ENCODE measurements at regions of chr9 and their contacts with region 1.

Region 1: DNA sequence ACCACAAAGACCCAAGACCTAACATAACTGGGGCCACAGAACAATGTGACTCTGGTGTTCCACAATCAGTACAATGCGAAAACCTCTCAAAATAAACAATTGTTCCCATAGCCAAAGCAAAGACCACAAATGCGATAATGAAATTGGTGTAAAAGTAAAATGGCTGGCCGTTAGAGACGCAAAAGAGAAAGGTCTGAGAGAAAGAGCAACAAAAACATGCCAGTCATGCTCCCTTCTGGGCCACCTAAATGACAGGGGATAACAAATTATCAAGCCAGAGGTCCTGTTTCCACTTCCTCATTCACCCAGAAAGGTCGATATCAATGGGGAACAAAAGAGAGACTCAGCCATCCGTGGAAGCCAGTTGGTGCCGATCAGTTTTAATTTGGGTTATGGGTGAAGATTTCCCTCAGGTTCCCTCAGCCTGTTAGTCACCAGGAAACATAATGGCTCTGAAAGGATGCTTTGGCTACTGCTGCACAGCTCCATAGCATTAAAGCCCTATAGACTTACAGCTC is 9.2 kb upstream of the CFAP95 start:
- DNase-seq: no peak
- ATAC-seq: peak; percentile 71
- H3K4me3 ChIP-seq: no peak overlapping the region
- H3K27ac ChIP-seq: no peak overlapping the region
- H3K4me1 ChIP-seq: no peaks in the 10 kb centered on the region
- H3K27me3 ChIP-seq: no peaks in the 10 kb centered on the region
- CTCF ChIP-seq: no peak
- EP300 ChIP-seq: no peak
- POLR2A ChIP-seq: no peak
- RAD21 ChIP-seq: no peak

Region 2: GRCh38 chr9:69657269-69657668 is 154.1 kb before region 1 on chr9:
- CTCF ChIA-PET with region 1: no interaction called
- POLR2A ChIA-PET with region 1: no interaction called
- RAD21 ChIA-PET with region 1: no interaction called
- SMC1A ChIA-PET with region 1: no interaction called
- in situ Hi-C with region 1: no loop called
- intact Hi-C with region 1: no loop called
- DNase-seq: no peak
- ATAC-seq: no peak
- H3K4me3 ChIP-seq: no peak overlapping the region
- H3K27ac ChIP-seq: no peak overlapping the region
- H3K4me1 ChIP-seq: no peaks in the 10 kb centered on the region
- H3K27me3 ChIP-seq: no peaks in the 10 kb centered on the region; a peak in 1 of 4 replicates
- CTCF ChIP-seq: no peak
- EP300 ChIP-seq: no peak
- POLR2A ChIP-seq: no peak
- RAD21 ChIP-seq: no peak

Region 3: GRCh38 chr9:69771775-69772418 is 39.5 kb before region 1 on chr9:
- CTCF ChIA-PET with region 1: no interaction called
- POLR2A ChIA-PET with region 1: no interaction called
- RAD21 ChIA-PET with region 1: no interaction called
- SMC1A ChIA-PET with region 1: no interaction called
- in situ Hi-C with region 1: no loop called
- intact Hi-C with region 1: loop called (anchors 5 kb)
- DNase-seq: no peak
- ATAC-seq: no peak
- H3K4me3 ChIP-seq: no peak overlapping the region
- H3K27ac ChIP-seq: no peak overlapping the region
- H3K4me1 ChIP-seq: no peaks in the 10 kb centered on the region
- H3K27me3 ChIP-seq: no peaks in the 10 kb centered on the region
- CTCF ChIP-seq: no peak
- EP300 ChIP-seq: no peak
- POLR2A ChIP-seq: no peak
- RAD21 ChIP-seq: no peak

Measured in GM12878 (cell line).